ENCODE measurements at regions of chr6 and their contacts with region 1.

Region 1: DNA sequence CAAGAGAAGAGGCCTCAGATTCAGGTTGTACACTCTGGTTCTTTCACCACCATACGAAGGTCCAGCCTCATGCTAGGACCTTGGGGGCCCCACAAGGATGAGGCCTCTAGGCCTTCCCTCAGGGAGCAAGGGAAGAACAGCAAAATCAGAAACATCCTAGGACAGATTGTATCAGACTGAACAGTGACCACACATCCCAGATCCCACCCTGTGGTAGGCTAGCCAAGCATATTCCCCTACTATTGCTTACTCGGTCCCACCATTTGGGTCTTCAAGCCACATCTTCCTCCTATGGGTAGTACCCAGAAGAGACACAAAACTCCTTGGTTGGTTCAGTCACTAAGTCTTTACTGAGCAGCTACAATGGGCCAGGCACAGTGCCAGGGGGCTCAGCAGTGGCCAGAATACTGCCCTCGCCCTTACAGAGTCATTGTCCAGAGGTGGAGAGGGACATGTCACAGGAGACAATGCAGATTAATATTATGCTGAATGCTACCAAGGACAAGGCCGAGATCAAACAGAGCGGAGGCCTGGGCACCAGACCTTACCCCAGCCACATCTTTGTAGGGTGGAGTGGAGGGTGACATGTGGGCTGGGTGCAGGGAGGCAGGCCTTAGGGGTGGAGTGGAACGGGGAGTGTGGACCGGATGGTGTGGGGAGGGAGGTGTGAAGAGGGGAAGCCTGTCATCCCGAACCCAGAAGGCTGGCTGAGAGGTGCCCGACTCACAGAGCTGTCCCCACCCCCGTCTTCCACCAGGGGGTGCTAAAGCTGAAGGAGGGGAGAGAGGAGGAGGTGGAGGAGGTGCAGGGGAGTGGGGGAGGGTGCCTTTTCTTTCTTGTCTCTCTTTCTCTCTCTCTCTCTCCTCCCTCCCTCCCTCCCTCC is 6.8 kb upstream of the MAPK13 start:
- DNase-seq: peak; percentile 93

Region 2: GRCh38 chr6:36196880-36197548 is 73.5 kb after region 1 on chr6:
- intact Hi-C with region 1: loop called in 1 of 2 experiments (anchors 10 kb)
- DNase-seq: peak; percentile 100

Region 3: GRCh38 chr6:36350681-36351571 is 227.4 kb after region 1 on chr6:
- intact Hi-C with region 1: loop called in 1 of 2 experiments (anchors 10 kb)
- DNase-seq: peak; percentile 92

Region 4: DNA sequence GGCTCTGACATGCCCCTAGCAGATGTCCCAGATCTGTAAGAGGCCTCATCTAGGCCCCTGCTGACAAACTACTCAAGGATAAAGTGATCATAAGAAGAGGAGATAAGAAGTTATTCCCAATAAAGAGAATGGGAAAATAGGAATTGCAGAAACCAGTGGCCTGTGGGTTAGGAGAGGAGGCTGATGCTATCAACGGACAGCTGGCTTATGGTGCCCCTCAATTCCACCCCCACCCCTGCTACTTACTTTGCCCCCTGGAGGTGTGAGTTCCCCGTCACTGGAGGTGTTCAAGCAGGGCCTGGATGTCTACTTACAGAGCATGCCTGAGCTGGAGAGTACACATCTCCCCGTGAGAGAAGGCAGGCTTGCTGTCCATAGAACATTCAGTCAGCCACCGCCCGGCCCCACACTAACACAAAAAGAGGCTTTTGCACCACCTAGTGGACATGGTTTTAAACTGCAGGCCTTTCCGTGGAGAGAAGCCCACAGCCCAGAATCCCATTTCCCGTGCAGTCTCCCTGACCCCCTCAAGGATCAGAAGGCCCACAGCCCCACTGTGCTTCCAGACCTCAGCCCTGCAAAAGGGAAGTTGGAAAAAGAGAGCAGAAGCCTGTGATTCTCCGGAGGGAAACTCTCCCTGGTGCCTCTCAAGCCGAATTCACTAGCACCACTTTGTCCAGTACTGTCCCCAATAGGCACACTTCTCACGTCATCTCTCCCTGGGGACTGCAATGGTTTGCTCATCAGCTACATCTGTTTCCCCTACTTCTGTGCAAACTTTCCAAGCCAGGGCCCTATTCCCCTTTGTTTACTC is 236.9 kb after region 1 on chr6:
- intact Hi-C with region 1: loop called (anchors 10 kb)
- DNase-seq: peak; percentile 91